Left lung (tissue), 14 donors: ENCODE measurements at regions of chr2 and their contacts with region 1.

Region 1: DNA sequence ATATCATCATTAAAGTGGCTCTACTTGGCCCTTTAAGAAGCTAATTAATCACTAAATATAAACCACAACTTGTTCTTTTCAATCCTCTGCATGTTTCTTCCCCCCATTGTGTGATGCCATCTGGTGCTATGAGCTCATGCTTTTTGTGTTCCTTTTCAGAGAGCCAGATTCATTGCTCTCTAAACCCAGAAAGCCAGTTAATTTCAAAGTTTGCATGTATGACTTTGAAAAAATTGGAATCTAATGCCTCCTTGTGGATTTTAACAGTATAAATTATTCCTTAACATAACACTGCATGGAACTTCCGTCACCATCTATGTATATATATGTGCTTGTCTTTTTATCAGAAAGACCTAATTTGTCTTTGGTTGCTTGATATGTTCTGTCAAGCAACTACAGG is 31.1 kb downstream of the TMEM178A start:
- DNase-seq: peak in 2 of 4 donors; percentile 46 to 60
- ATAC-seq: peak; percentile 75
- H3K4me3 ChIP-seq: no peak overlapping the region
- H3K27ac ChIP-seq: no peak overlapping the region
- H3K4me1 ChIP-seq: peaks cover 0 to 8% of the 10 kb centered on the region in 2 donors
- H3K27me3 ChIP-seq: no peaks in the 10 kb centered on the region
- CTCF ChIP-seq: peak in 1 of 2 donors; percentile 17

Region 2: GRCh38 chr2:39513641-39514094 is 183.2 kb before region 1 on chr2:
- intact Hi-C with region 1: loop called in 1 of 2 experiments (anchors 10 kb)
- DNase-seq: peak in 2 of 4 donors; percentile 42 to 71
- ATAC-seq: peak; percentile 92
- H3K4me3 ChIP-seq: no peak overlapping the region
- H3K27ac ChIP-seq: peak overlapping the region; percentile 24 to 40
- H3K4me1 ChIP-seq: peaks cover 15 to 36% of the 10 kb centered on the region in 2 donors
- H3K27me3 ChIP-seq: no peaks in the 10 kb centered on the region
- CTCF ChIP-seq: peak; percentile 51 to 64

Region 3: DNA sequence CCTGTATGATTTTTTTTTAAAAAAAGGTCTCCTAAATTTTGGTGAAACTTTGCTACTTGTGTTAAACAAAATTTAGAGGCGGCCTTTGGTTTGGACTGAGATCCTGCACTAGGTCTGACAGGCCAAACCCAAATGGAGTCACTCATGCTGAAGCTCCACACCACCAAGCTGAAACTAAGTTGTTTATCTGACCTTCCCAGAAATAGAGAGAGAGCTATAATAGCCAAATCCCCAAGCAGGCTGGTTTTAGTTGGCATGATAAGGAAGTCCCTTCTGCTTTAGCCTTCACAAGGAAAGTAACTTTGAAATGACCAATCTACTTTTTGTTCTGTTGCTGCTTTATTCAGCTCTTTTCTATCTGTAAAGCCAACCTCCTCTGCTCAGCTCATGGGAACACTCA is 99.3 kb after region 1 on chr2:
- intact Hi-C with region 1: no loop called
- DNase-seq: no peak
- ATAC-seq: no peak
- H3K4me3 ChIP-seq: no peak overlapping the region
- H3K27ac ChIP-seq: no peak overlapping the region
- H3K4me1 ChIP-seq: no peaks in the 10 kb centered on the region
- H3K27me3 ChIP-seq: no peaks in the 10 kb centered on the region
- CTCF ChIP-seq: no peak